ENCODE measurements at regions of chr12 and their contacts with region 1.

Region 1: GRCh38 chr12:59087077-59087673 is 166.9 kb upstream of the LRIG3 start:
- DNase-seq: no peak
- H3K4me3 ChIP-seq: no peak overlapping the region
- H3K27ac ChIP-seq: no peak overlapping the region
- H3K4me1 ChIP-seq: peaks cover 0 to 12% (median 4%) of the 10 kb centered on the region in 4 donors
- H3K27me3 ChIP-seq: no peaks in the 10 kb centered on the region
- CTCF ChIP-seq: peak; percentile 24 to 44

Region 2: GRCh38 chr12:58346032-58346632 is 741.0 kb before region 1 on chr12:
- intact Hi-C with region 1: loop called (anchors 10 kb)
- DNase-seq: no peak
- H3K4me3 ChIP-seq: no peak overlapping the region
- H3K27ac ChIP-seq: no peak overlapping the region
- H3K4me1 ChIP-seq: peaks cover 0 to 4% (median 0%) of the 10 kb centered on the region in 4 donors
- H3K27me3 ChIP-seq: no peaks in the 10 kb centered on the region
- CTCF ChIP-seq: peak; percentile 85 to 87

Region 3: GRCh38 chr12:59304077-59304721 is 217.0 kb after region 1 on chr12:
- intact Hi-C with region 1: no loop called
- DNase-seq: no peak
- H3K4me3 ChIP-seq: no peak overlapping the region
- H3K27ac ChIP-seq: no peak overlapping the region
- H3K4me1 ChIP-seq: no peaks in the 10 kb centered on the region
- H3K27me3 ChIP-seq: no peaks in the 10 kb centered on the region
- CTCF ChIP-seq: no peak